ENCODE measurements at regions of chr1 and their contacts with region 1.

Region 1: GRCh38 chr1:39268112-39268581 is 63.7 kb downstream of the MACF1 start:
- DNase-seq: peak; percentile 83
- H3K4me3 ChIP-seq: peak overlapping the region; percentile 17 to 35 (median 18)
- H3K27ac ChIP-seq: peak overlapping the region; percentile 81
- H3K4me1 ChIP-seq: peaks cover 30% of the 10 kb centered on the region
- H3K27me3 ChIP-seq: no peaks in the 10 kb centered on the region
- CTCF ChIP-seq: no peak

Region 2: GRCh38 chr1:39204441-39205081 is 63.6 kb before region 1 on chr1 and contains the start of gene MACF1:
- CTCF ChIA-PET with region 1: no interaction called
- dilution Hi-C with region 1: no loop called
- in situ Hi-C with region 1: loop called in 1 of 2 experiments (anchors 10 kb)
- intact Hi-C with region 1: no loop called
- DNase-seq: peak; percentile 72
- H3K4me3 ChIP-seq: peak within 1 kb of the TSS; percentile 6 to 27 (median 21)
- H3K27ac ChIP-seq: peak within 1 kb of the TSS; percentile 80
- H3K4me1 ChIP-seq: peaks cover 25% of the 10 kb centered on the region
- H3K27me3 ChIP-seq: no peaks in the 10 kb centered on the region
- CTCF ChIP-seq: peak; percentile 9 to 26
- total RNA-seq, gene MACF1: 304 to 440 TPM

Region 3: DNA sequence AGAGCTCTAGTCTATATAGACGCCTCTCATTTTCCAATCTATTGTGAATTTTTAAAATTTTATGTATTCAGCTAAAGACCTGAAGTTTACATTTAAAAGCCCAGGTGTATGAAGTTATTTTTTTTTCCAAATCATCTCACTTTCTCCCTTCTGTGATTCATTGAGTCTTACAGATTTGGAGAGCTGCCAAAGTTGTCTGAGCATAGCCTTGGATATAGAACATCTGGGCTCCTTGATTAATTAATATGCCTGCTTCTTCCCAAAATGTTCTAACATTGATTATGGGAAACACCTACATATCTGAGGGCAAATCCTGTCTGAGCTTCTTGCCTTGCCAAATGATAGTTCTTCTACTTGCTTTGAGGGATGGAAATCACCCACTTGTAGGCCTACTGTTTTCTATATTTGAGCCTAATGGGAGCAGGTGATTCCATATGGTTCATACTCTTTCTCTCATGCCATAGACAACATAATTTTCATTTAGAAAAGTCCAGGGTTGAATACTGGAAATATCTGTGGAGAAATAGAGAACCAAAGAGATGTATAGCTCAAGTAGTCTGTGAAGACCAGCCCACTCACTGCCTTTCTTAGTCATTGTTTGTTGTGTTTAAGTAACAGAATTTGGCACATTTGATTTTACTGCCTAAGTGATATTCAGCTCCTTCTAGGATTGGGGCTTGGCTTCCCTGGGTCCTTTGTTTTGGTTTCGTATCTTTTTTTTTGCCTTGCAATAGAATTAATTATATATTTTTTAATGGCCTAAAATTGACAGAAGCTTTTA is 17.5 kb before region 1 on chr1:
- CTCF ChIA-PET with region 1: no interaction called
- dilution Hi-C with region 1: no loop called
- in situ Hi-C with region 1: no loop called
- intact Hi-C with region 1: no loop called
- DNase-seq: peak; percentile 48
- H3K4me3 ChIP-seq: no peak overlapping the region
- H3K27ac ChIP-seq: no peak overlapping the region
- H3K4me1 ChIP-seq: peaks cover 15% of the 10 kb centered on the region
- H3K27me3 ChIP-seq: no peaks in the 10 kb centered on the region
- CTCF ChIP-seq: no peak

Region 4: GRCh38 chr1:39701049-39701439 is 432.9 kb after region 1 on chr1:
- CTCF ChIA-PET with region 1: no interaction called
- dilution Hi-C with region 1: no loop called
- in situ Hi-C with region 1: no loop called
- intact Hi-C with region 1: loop called (anchors 10 kb)
- DNase-seq: no peak
- H3K4me3 ChIP-seq: no peak overlapping the region
- H3K27ac ChIP-seq: no peak overlapping the region
- H3K4me1 ChIP-seq: peaks cover 4% of the 10 kb centered on the region
- H3K27me3 ChIP-seq: no peaks in the 10 kb centered on the region
- CTCF ChIP-seq: no peak

Measured in mammary epithelial cell (primary cell).